B cell (primary cell): ENCODE measurements at regions of chr11 and their contacts with region 1.

Region 1: DNA sequence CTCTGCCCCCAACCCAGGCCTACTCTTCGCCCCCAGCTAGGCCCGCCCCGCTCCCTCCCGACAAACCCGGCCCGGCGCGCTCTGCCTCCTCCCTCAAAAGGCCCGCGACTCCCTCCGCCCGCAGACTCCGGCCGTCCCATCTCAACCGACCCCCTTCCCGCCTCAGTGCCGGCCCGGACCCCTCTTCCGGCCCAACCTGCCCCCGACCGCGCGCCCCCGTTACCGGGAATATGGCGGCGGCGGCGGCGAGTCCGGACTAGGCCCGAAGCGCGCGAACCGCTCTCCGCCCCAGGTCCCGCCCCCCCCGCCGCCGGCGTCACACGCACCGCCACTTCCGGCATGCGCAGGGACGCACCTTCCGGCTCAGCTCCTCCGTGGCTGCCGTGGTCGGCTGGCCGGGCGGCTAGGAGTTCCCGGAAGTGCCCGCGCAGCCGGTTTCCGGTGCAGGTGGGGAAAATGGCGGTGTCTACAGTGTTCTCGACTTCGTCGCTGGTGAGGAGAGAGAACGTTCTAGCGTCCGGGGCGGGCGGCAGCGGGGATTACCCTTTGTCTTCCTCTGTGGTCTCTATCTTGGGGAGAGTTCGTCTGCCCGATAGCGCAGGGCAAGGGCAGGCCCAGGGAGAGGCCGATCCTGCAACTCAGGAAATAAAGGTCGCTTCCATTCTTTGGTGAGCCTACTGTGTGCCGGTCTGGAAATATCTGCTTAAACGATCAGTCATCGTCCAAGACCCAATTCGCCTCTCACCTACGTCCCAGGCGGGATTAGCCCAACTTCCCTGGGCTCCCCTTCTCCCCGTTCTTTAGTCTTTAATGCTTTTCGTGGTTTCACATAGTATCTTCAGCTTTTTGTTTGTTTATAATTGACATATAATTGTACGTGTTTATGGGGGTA is at the starts of genes CPSF7 and SDHAF2:
- DNase-seq: peak; percentile 98
- ATAC-seq: peak; percentile 85
- H3K4me3 ChIP-seq: peak within 1 kb of the TSS; percentile 77 to 96 (median 89)
- H3K4me3 Mint-ChIP-seq: peak within 1 kb of the TSS; percentile 100
- H3K27ac ChIP-seq: peak within 1 kb of the TSS; percentile 97 to 100
- H3K27ac Mint-ChIP-seq: peak within 1 kb of the TSS; percentile 100
- H3K4me1 ChIP-seq: peaks cover 18 to 27% of the 10 kb centered on the region in 2 donors
- H3K4me1 Mint-ChIP-seq: peaks cover 51% of the 10 kb centered on the region
- H3K27me3 ChIP-seq: no peaks in the 10 kb centered on the region
- H3K27me3 Mint-ChIP-seq: no peaks in the 10 kb centered on the region
- CTCF ChIP-seq: no peak
- total RNA-seq, gene CPSF7: 165 and 167 TPM in 2 replicates
- total RNA-seq, gene SDHAF2: 48.9 and 54.0 TPM in 2 replicates

Region 2: DNA sequence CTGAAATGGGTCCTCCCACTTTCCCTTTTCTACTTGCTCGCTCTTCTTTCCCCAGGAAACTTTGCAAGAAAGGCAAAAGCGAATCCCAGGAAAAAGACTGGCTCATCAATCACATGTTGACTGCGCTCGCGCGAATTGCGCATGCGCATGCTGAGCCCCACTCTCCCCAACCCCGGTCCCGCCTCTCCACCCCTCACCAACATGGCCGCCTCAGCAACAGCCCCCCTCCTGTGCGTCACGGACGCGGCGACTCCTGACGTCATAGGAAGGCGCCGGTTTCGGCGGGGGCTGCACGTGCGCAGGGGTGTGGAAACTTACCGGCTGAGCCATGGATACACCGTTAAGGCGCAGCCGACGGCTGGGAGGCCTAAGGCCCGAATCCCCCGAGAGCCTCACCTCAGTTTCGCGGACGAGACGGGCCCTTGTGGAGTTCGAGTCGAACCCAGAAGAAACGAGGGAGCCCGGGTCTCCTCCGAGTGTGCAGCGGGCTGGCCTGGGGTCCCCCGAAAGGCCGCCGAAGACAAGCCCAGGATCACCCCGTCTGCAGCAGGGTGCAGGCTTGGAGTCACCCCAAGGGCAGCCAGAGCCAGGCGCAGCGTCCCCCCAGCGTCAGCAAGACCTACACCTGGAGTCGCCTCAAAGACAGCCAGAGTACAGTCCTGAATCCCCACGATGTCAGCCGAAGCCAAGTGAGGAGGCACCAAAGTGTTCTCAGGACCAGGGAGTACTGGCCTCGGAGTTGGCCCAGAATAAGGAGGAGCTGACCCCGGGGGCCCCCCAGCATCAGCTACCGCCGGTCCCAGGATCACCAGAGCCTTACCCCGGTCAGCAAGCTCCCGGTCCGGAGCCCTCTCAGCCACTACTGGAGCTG is 587.9 kb before region 1 on chr11 and contains the start of gene CCDC86:
- CTCF ChIA-PET with region 1: no interaction called
- POLR2A ChIA-PET with region 1: no interaction called
- intact Hi-C with region 1: loop called (anchors 5 kb)
- DNase-seq: peak; percentile 98
- ATAC-seq: peak; percentile 97
- H3K4me3 ChIP-seq: peak within 1 kb of the TSS; percentile 54 to 97 (median 88)
- H3K4me3 Mint-ChIP-seq: peak within 1 kb of the TSS; percentile 93
- H3K27ac ChIP-seq: peak within 1 kb of the TSS; percentile 49 to 81
- H3K27ac Mint-ChIP-seq: peak within 1 kb of the TSS; percentile 93
- H3K4me1 ChIP-seq: peaks cover 32 to 33% of the 10 kb centered on the region in 2 donors
- H3K4me1 Mint-ChIP-seq: peaks cover 48% of the 10 kb centered on the region
- H3K27me3 ChIP-seq: no peaks in the 10 kb centered on the region
- H3K27me3 Mint-ChIP-seq: no peaks in the 10 kb centered on the region
- CTCF ChIP-seq: no peak
- total RNA-seq, gene CCDC86: 9.5 and 10.5 TPM in 2 replicates

Region 3: DNA sequence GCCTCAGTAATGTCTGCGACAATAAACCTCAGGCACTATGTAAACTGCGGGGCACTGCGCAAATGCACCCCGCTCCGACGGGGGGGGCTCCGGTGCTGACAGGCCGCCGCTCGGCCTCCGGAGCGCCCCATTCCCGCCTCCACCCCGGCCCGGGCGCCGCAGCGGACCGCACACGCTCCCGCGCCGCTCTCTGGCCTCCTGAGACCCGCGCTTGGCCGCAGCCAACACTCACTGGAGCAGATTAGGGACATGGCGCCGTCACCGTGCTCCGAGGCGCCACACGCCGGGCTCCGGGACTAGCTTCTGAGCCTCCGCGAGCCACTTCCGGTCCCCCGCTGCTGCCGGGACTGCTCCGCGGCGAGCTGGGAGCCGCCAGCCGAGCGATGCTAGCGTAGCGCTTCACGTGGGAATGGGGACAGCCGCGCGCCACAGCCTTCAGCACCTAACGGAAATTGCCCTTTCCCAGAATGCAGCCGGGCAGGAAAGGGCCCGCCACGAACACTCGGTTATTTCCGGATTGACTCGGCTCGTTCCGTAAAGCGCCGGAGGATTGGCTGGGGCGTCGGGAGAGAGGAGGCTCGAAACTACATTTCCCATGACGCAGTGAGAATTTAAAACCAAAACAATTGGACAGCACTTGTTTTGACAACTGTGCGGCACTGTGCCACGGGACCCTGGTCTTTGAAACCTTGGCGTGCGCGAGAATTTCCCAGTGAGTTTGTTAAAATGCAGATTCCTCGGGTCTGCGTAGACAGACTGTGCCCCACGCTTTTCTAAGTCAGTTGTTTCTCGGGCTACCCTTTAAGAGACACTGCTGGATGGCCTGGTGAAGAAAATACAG is 523.6 kb before region 1 on chr11 and contains the start of gene PRPF19:
- CTCF ChIA-PET with region 1: no interaction called
- POLR2A ChIA-PET with region 1: no interaction called
- intact Hi-C with region 1: no loop called
- DNase-seq: peak; percentile 98
- ATAC-seq: peak; percentile 89
- H3K4me3 ChIP-seq: peak within 1 kb of the TSS; percentile 72 to 98 (median 81)
- H3K4me3 Mint-ChIP-seq: peak within 1 kb of the TSS; percentile 92
- H3K27ac ChIP-seq: peak within 1 kb of the TSS; percentile 80 to 83
- H3K27ac Mint-ChIP-seq: peak within 1 kb of the TSS; percentile 97
- H3K4me1 ChIP-seq: peaks cover 47 to 51% of the 10 kb centered on the region in 2 donors
- H3K4me1 Mint-ChIP-seq: peaks cover 65% of the 10 kb centered on the region
- H3K27me3 ChIP-seq: no peaks in the 10 kb centered on the region
- H3K27me3 Mint-ChIP-seq: no peaks in the 10 kb centered on the region
- CTCF ChIP-seq: no peak
- total RNA-seq, gene PRPF19: 80.4 and 89.9 TPM in 2 replicates

Region 4: GRCh38 chr11:61161190-61162091 is 268.5 kb before region 1 on chr11 and contains the start of gene VPS37C:
- CTCF ChIA-PET with region 1: no interaction called
- POLR2A ChIA-PET with region 1: no interaction called
- intact Hi-C with region 1: loop called (anchors 10 kb)
- DNase-seq: peak; percentile 98
- ATAC-seq: peak; percentile 75
- H3K4me3 ChIP-seq: peak within 1 kb of the TSS; percentile 32 to 68 (median 60)
- H3K4me3 Mint-ChIP-seq: peak within 1 kb of the TSS; percentile 91
- H3K27ac ChIP-seq: peak within 1 kb of the TSS; percentile 94 to 95
- H3K27ac Mint-ChIP-seq: peak within 1 kb of the TSS; percentile 96
- H3K4me1 ChIP-seq: peaks cover 42 to 50% of the 10 kb centered on the region in 2 donors
- H3K4me1 Mint-ChIP-seq: peaks cover 54% of the 10 kb centered on the region
- H3K27me3 ChIP-seq: no peaks in the 10 kb centered on the region
- H3K27me3 Mint-ChIP-seq: no peaks in the 10 kb centered on the region
- CTCF ChIP-seq: no peak
- total RNA-seq, gene VPS37C: 18.4 and 20.1 TPM in 2 replicates

Region 5: GRCh38 chr11:61266602-61267001 is 163.3 kb before region 1 on chr11:
- CTCF ChIA-PET with region 1: no interaction called
- POLR2A ChIA-PET with region 1: no interaction called
- intact Hi-C with region 1: no loop called
- DNase-seq: no peak
- ATAC-seq: no peak
- H3K4me3 ChIP-seq: no peak overlapping the region
- H3K4me3 Mint-ChIP-seq: no peak overlapping the region
- H3K27ac ChIP-seq: no peak overlapping the region
- H3K27ac Mint-ChIP-seq: no peak overlapping the region
- H3K4me1 ChIP-seq: no peaks in the 10 kb centered on the region
- H3K4me1 Mint-ChIP-seq: no peaks in the 10 kb centered on the region
- H3K27me3 ChIP-seq: no peaks in the 10 kb centered on the region
- H3K27me3 Mint-ChIP-seq: no peaks in the 10 kb centered on the region
- CTCF ChIP-seq: no peak

Region 6: DNA sequence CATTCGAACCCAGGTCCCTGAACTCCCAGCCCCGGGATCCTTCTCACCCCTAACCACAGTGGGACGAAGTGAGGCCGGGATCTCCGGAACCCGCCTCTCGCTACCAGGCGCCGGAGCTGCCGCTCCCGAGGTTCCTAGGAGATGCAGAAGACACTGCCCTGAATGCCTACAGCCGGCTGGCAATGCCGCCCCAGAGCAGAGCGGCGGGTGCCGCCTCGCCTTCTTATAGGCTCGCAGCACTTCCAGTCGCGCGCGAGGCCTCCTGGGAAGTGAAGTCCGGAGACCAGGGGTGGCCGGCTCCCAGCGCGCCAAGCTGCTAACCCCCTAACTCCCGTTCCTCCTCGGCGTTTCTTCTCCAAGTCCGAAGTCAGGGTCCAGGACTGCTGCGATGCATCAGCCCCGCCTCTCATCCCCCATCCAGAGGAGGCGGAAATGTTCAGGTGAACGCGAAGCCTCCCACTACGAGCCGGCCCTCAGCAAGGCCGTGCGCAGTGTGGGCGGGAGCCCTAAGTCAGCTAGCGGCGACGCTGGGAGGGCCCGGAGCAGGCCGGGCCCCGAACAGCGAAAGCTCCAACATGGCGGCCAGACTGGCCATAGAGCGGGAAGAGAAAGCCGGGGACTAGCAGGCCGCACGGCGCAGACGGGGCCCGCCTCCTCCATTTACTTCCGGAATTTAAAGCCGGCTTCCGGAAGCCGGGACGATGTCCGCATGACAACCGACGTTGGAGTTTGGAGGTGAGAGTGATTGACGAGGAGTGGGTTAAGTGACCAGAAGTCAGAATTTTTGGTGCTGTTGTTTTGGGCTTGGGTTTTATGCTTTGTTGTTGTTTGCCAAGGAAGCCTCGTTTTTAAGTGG is 68.0 kb before region 1 on chr11 and contains the starts of genes CYB561A3 and TMEM138:
- CTCF ChIA-PET with region 1: interaction called, 13 read pairs
- POLR2A ChIA-PET with region 1: interaction called, 14 read pairs
- intact Hi-C with region 1: loop called (anchors 1 kb)
- DNase-seq: peak; percentile 94
- ATAC-seq: peak; percentile 72
- H3K4me3 ChIP-seq: peak within 1 kb of the TSS; percentile 86 to 99 (median 97)
- H3K4me3 Mint-ChIP-seq: peak within 1 kb of the TSS; percentile 99
- H3K27ac ChIP-seq: peak within 1 kb of the TSS; percentile 93
- H3K27ac Mint-ChIP-seq: peak within 1 kb of the TSS; percentile 98
- H3K4me1 ChIP-seq: peaks cover 44 to 50% of the 10 kb centered on the region in 2 donors
- H3K4me1 Mint-ChIP-seq: peaks cover 53% of the 10 kb centered on the region
- H3K27me3 ChIP-seq: no peaks in the 10 kb centered on the region
- H3K27me3 Mint-ChIP-seq: no peaks in the 10 kb centered on the region
- CTCF ChIP-seq: no peak
- total RNA-seq, gene CYB561A3: 248 and 259 TPM in 2 replicates
- total RNA-seq, gene TMEM138: 84.3 and 85.3 TPM in 2 replicates

Region 7: DNA sequence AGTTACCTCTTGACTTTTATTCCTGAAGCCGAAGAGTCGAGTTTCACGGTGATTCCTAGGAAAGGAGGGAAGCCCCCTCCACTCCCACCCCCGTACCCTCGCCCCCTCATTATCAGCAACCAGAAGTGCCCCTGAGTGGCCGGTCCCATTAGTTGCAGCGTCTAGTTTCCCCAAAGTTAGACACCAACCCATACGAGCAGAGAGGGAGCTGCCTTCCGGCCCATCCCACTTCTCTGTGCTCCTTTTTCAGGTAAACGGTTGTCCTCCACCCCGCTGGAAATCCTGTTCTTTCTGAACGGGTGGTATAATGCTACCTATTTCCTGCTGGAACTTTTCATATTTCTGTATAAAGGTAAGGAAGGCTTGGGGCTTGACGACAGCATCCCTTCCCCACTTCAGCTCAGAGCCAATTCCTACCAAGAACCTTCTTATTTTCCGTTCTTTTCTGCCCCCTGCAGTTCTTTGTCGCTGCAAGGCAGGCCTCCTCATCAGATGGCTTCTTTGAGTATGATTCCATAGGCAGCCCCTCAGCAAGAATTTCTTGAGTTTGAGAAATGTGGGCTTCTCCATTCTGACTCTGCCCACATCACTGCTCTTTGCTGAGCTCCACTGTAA is 36.8 kb before region 1 on chr11:
- CTCF ChIA-PET with region 1: interaction called, 9 read pairs
- POLR2A ChIA-PET with region 1: interaction called, 14 read pairs
- intact Hi-C with region 1: loop called (anchors 1 kb)
- DNase-seq: peak; percentile 55
- ATAC-seq: peak; percentile 16
- H3K4me3 ChIP-seq: peak overlapping the region; percentile 63 to 96 (median 87)
- H3K4me3 Mint-ChIP-seq: peak overlapping the region; percentile 98
- H3K27ac ChIP-seq: peak overlapping the region; percentile 68 to 86
- H3K27ac Mint-ChIP-seq: peak overlapping the region; percentile 97
- H3K4me1 ChIP-seq: peaks cover 13 to 19% of the 10 kb centered on the region in 2 donors
- H3K4me1 Mint-ChIP-seq: peaks cover 22% of the 10 kb centered on the region
- H3K27me3 ChIP-seq: no peaks in the 10 kb centered on the region
- H3K27me3 Mint-ChIP-seq: no peaks in the 10 kb centered on the region
- CTCF ChIP-seq: no peak

Region 8: DNA sequence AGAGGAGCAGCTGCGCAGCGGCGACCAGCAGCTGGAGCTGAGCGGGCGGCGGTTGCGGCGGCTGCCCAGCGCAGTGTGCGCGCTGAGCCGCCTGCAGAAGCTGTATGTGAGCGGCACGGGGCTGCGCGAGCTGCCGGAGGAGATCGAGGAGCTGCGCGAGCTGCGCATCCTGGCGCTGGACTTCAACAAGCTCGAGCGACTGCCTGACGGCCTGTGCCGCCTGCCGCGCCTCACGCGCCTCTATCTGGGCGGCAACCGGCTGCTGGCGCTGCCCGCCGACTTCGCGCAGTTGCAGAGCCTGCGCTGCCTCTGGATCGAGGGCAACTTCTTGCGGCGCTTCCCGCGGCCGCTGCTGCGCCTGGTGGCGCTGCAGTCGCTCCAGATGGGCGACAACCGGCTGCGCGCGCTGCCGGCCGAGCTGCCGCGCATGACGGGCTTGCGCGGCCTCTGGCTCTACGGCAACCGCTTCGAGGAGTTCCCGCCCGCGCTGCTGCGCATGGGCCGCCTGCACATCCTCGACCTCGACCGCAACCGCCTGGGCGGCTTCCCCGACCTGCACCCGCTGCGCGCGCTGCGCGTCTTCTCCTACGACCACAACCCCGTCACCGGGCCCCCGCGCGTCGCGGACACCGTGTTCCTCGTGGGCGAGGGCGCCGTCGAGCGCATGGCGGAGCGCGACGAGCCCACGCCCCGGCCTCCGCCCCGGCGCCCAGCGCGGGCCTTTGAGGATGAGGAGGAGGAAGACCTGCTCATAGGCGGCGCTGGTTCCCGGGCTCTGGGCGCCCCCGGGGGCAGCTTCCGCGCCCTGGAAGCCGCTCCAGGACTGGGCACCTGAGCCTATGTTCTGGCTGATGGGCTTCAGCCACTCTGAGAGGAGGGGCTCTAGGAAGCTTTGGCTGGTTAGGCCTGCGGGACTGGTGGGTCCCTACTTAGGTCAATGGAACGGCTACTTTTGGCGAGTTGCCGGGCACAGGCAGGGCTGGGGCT is 79.4 kb after region 1 on chr11:
- CTCF ChIA-PET with region 1: no interaction called
- POLR2A ChIA-PET with region 1: no interaction called
- intact Hi-C with region 1: no loop called
- DNase-seq: peak; percentile 80
- ATAC-seq: peak; percentile 63
- H3K4me3 ChIP-seq: peak overlapping the region in 3 of 5 experiments; percentile 34 to 46 (median 40)
- H3K4me3 Mint-ChIP-seq: peak overlapping the region; percentile 63
- H3K27ac ChIP-seq: no peak overlapping the region
- H3K27ac Mint-ChIP-seq: no peak overlapping the region
- H3K4me1 ChIP-seq: peaks cover 17% of the 10 kb centered on the region in 2 donors
- H3K4me1 Mint-ChIP-seq: peaks cover 12% of the 10 kb centered on the region
- H3K27me3 ChIP-seq: peaks cover 0 to 56% (median 17%) of the 10 kb centered on the region in 4 experiments
- H3K27me3 Mint-ChIP-seq: peaks cover 47% of the 10 kb centered on the region
- CTCF ChIP-seq: peak; percentile 38

Region 9: DNA sequence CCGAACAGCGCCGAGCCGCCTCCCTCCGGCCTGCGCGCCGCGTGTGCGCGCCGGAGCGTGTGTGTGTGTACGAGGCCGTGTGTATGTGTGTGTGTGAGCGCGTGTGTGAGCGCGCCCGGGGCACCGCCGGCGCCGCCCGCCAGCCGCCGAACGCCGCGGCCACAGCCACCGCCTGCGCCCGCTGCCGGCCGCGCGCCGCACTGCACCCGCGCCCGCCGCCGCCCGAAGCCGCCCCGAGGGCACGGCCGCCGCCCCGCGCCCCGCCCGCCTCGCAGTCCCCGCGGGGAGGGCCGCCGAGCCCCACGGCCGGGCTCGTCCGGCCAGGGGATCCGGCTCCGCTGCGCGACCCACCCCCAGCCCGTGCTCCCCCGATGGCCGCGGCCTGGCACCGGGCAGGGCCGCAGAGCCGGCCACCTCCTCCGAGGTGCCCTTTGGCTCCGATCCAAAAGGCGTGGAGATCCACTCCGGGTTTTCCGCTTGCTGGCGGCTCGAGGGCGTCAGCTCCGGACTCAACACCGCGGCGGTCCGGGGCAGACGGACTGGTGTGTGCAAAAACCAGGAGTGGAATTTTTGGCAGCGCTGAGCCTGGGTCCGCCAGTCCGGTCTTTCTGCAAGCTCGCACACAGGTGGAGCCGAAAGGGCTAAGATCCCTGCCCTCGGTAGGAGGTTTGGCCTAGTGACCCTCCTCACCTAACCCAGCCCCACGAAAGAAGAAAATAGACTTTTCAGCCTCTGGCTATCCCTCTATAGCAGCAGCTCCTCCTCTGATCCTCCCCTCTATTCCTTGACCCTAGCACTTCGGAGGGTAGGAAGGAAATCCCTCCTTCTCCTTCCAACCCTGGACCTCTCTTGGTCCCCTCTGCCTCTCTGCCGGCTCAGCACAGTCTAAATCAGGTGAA is 151.3 kb after region 1 on chr11 and contains the start of gene SYT7:
- CTCF ChIA-PET with region 1: no interaction called
- POLR2A ChIA-PET with region 1: no interaction called
- intact Hi-C with region 1: loop called (anchors 5 kb)
- DNase-seq: peak; percentile 98
- ATAC-seq: peak; percentile 88
- H3K4me3 ChIP-seq: peak within 1 kb of the TSS in 4 of 5 experiments; percentile 11 to 57 (median 51)
- H3K4me3 Mint-ChIP-seq: peak within 1 kb of the TSS; percentile 88
- H3K27ac ChIP-seq: no peak within 1 kb of the TSS
- H3K27ac Mint-ChIP-seq: peak within 1 kb of the TSS; percentile 90
- H3K4me1 ChIP-seq: peaks cover 13 to 16% of the 10 kb centered on the region in 2 donors
- H3K4me1 Mint-ChIP-seq: peaks cover 18% of the 10 kb centered on the region
- H3K27me3 ChIP-seq: peaks cover 0 to 39% (median 17%) of the 10 kb centered on the region in 4 experiments
- H3K27me3 Mint-ChIP-seq: peaks cover 34% of the 10 kb centered on the region
- CTCF ChIP-seq: no peak
- total RNA-seq, gene SYT7: not detected in 2 replicates